ENCODE measurements at regions of chr3 and their contacts with region 1.

Region 1: DNA sequence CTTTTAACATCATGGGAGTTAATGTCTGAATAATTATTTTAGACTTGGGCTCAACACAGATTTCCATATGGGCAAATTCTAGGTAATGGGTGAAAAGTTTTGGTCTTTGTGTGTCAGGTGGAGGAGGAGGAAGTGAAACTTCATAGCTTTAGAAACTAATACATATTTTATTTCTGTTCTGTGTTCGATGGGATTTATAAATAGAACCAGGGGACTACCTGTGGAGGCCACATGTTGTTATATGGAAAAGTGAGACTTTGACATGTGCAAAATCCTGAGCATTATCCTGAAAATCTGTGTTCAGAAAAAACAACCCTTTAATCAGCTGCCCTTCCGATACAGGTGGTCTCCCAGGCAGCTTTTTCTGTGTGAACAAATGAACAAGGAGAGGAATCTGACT is 209.5 kb downstream of the SOX2 start:
- DNase-seq: peak; percentile 42
- ATAC-seq: peak; percentile 95
- H3K4me3 ChIP-seq: peak overlapping the region; percentile 53; the same call in 1 of the 2 replicates
- H3K27ac ChIP-seq: peak overlapping the region; percentile 86
- H3K4me1 ChIP-seq: peaks cover 22% of the 10 kb centered on the region
- H3K27me3 ChIP-seq: no peaks in the 10 kb centered on the region
- CTCF ChIP-seq: no peak
- EP300 ChIP-seq: peak in 1 of 2 experiments; percentile 71; a peak in 2 of 4 replicates
- POLR2A ChIP-seq: no peak
- RAD21 ChIP-seq: no peak

Region 2: DNA sequence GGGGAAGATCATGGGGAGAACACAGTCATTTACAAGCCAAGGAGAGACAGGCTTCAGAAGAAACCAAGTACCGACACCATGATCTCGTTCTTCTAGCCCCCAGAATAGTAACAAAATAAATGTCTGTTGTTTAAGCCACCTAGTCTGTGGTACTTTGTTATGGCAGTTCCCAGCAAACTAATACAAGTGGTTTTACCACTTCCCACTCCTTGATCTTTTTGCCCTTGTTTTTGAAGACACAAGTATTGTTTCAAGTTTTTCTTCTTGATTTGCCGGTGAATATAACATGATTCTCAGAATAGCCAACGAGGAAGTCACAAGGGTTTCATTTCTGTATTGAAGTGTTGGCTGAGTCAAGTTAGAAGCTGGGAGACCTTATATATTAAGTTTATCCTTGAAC is 10.8 kb after region 1 on chr3:
- CTCF ChIA-PET with region 1: interaction called, 3 read pairs
- POLR2A ChIA-PET with region 1: no interaction called
- RAD21 ChIA-PET with region 1: interaction called, 3 read pairs
- SMC1A ChIA-PET with region 1: interaction called, 3 read pairs
- in situ Hi-C with region 1: no loop called
- intact Hi-C with region 1: loop called (anchors 1 kb)
- DNase-seq: peak; percentile 61
- ATAC-seq: peak; percentile 74
- H3K4me3 ChIP-seq: 0 out of 2 replicates have a peak overlapping the region, but pooled peaks have one; percentile 1
- H3K27ac ChIP-seq: peak overlapping the region; percentile 62
- H3K4me1 ChIP-seq: peaks cover 29% of the 10 kb centered on the region
- H3K27me3 ChIP-seq: no peaks in the 10 kb centered on the region
- CTCF ChIP-seq: no peak
- EP300 ChIP-seq: peak in 1 of 2 experiments; percentile 29; a peak in 1 of 4 replicates
- POLR2A ChIP-seq: no peak
- RAD21 ChIP-seq: no peak

Measured in GM12878 (cell line).